WTC11 (cell line): ENCODE measurements at regions of chr1 and their contacts with region 1.

Region 1: GRCh38 chr1:160169553-160170399 is 18.4 kb downstream of the ATP1A4 start:
- DNase-seq: peak; percentile 75
- ATAC-seq: peak; percentile 78
- H3K4me3 Mint-ChIP-seq: peak overlapping the region; percentile 42
- H3K27ac Mint-ChIP-seq: peak overlapping the region; percentile 94
- H3K4me1 Mint-ChIP-seq: peaks cover 64% of the 10 kb centered on the region
- H3K27me3 Mint-ChIP-seq: peaks cover 25% of the 10 kb centered on the region
- CTCF ChIP-seq: no peak

Region 2: DNA sequence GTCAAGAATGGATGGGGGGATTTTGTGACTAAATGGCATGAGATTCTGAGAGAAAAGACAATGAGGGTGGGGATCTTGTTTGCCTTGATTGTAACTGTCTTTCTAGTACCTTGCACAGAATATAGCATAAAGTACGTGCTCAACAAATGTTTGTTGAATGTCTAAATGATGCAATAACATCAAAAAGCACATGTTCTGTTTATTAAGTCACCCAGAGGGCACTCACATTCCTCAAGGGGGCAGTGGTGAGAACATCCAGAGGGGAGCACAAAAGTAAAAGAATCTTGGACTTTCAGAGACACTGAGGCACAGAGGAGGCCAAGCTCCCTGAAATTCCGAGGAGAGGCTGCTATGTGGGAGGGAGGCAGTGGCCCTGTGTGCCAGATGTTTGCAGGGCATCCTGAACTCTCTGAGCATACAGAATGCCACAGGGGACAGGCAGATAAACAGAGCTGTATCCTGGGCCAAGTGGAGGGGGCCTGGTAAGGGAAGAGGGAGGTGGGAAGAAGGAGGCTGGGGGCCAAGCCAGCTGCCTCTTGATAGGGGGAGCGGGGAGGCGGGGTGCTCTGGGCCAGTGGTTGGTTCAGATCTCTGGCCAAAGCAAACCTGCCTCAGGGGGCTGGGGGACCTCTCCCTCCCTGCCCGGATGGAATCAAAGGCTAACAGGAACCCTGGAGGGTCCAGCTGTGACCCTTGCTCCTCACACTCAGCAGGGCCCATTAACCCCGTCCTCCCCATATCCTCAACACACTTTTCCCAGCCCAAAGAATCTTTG is 60.7 kb before region 1 on chr1:
- CTCF ChIA-PET with region 1: interaction called, 19 read pairs
- POLR2A ChIA-PET with region 1: interaction called, 8 read pairs
- DNase-seq: no peak
- ATAC-seq: peak; percentile 61
- H3K4me3 Mint-ChIP-seq: no peak overlapping the region; the same call in 1 of the 2 replicates
- H3K27ac Mint-ChIP-seq: peak overlapping the region; percentile 30
- H3K4me1 Mint-ChIP-seq: peaks cover 50% of the 10 kb centered on the region
- H3K27me3 Mint-ChIP-seq: peaks cover 5% of the 10 kb centered on the region; the same call in 1 of the 2 replicates
- CTCF ChIP-seq: peak; percentile 33; the same call in 1 of the 2 replicates

Region 3: GRCh38 chr1:160205242-160206035 is 35.7 kb after region 1 on chr1 and contains the start of gene PEA15:
- CTCF ChIA-PET with region 1: interaction called, 13 read pairs
- POLR2A ChIA-PET with region 1: interaction called, 4 read pairs
- DNase-seq: peak; percentile 81
- ATAC-seq: peak; percentile 56
- H3K4me3 Mint-ChIP-seq: peak within 1 kb of the TSS; percentile 77
- H3K27ac Mint-ChIP-seq: no peak within 1 kb of the TSS
- H3K4me1 Mint-ChIP-seq: peaks cover 55% of the 10 kb centered on the region
- H3K27me3 Mint-ChIP-seq: no peaks in the 10 kb centered on the region; the same call in 1 of the 2 replicates
- CTCF ChIP-seq: no peak
- total RNA-seq, gene PEA15: 43.6 to 56.3 TPM (median 46.9 TPM) in 3 replicates

Region 4: GRCh38 chr1:160211046-160211790 is 41.4 kb after region 1 on chr1:
- CTCF ChIA-PET with region 1: interaction called, 13 read pairs
- POLR2A ChIA-PET with region 1: interaction called, 4 read pairs
- DNase-seq: peak; percentile 39
- ATAC-seq: no peak
- H3K4me3 Mint-ChIP-seq: no peak overlapping the region
- H3K27ac Mint-ChIP-seq: no peak overlapping the region
- H3K4me1 Mint-ChIP-seq: peaks cover 50% of the 10 kb centered on the region
- H3K27me3 Mint-ChIP-seq: no peaks in the 10 kb centered on the region
- CTCF ChIP-seq: no peak

Region 5: GRCh38 chr1:160219062-160219929 is 49.5 kb after region 1 on chr1:
- CTCF ChIA-PET with region 1: interaction called, 71 read pairs
- POLR2A ChIA-PET with region 1: interaction called, 8 read pairs
- DNase-seq: peak; percentile 69
- ATAC-seq: peak; percentile 87
- H3K4me3 Mint-ChIP-seq: no peak overlapping the region
- H3K27ac Mint-ChIP-seq: peak overlapping the region; percentile 79
- H3K4me1 Mint-ChIP-seq: peaks cover 15% of the 10 kb centered on the region
- H3K27me3 Mint-ChIP-seq: no peaks in the 10 kb centered on the region
- CTCF ChIP-seq: no peak

Region 6: GRCh38 chr1:160232911-160233310 is 63.1 kb after region 1 on chr1:
- CTCF ChIA-PET with region 1: no interaction called
- POLR2A ChIA-PET with region 1: no interaction called
- DNase-seq: no peak
- ATAC-seq: no peak
- H3K4me3 Mint-ChIP-seq: no peak overlapping the region
- H3K27ac Mint-ChIP-seq: no peak overlapping the region
- H3K4me1 Mint-ChIP-seq: peaks cover 11% of the 10 kb centered on the region
- H3K27me3 Mint-ChIP-seq: no peaks in the 10 kb centered on the region
- CTCF ChIP-seq: no peak

Region 7: DNA sequence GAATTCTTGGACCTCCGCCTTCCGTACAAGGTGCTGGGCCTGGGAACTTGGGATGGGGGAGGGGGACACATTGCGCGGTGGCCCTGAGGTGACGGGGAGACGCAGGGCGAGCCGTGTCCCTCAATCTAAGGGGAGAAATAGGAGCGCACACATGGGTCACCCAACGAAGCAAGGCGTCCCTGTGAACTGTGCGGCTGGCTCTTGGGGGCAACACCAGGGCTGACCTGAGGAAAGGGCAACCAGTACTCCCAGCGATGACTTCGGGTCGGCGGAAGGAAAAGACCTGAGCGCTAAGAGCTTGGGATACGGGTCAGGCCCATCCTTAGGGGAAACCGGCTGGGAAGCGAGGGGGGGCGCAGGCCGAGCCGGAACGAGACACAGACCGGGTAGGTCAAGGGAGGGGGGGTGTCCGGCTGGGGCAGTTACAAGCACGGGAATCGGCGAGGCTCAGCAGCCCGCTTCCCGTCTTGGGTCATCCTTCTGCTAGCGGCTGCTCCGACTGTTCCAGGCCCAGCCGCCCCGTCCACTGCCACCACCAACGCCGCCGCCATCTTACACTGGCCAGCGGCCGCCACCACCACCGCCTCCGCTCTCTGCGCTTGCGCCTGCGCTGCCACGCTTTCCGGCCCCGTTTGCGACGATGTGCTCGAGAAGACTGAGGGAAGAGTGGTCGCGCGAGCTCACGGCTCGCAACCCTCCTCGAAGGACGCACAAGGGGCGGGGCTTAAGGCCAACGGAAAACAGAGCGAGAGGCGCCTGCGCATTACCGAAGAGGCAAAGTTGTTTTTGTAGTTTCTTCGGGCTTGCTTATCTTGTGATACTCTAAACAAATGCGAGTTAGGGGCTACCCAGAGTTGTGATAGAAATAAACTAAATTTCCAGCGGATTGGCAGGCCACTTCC is 92.4 kb after region 1 on chr1 and contains the start of gene DCAF8:
- CTCF ChIA-PET with region 1: interaction called, 11 read pairs
- POLR2A ChIA-PET with region 1: no interaction called
- DNase-seq: peak; percentile 99
- ATAC-seq: peak; percentile 96
- H3K4me3 Mint-ChIP-seq: peak within 1 kb of the TSS; percentile 98
- H3K27ac Mint-ChIP-seq: peak within 1 kb of the TSS; percentile 99
- H3K4me1 Mint-ChIP-seq: peaks cover 32% of the 10 kb centered on the region
- H3K27me3 Mint-ChIP-seq: peaks cover 7% of the 10 kb centered on the region; the same call in 1 of the 2 replicates
- CTCF ChIP-seq: no peak
- total RNA-seq, gene DCAF8: 121 to 143 TPM (median 128 TPM) in 3 replicates